ENCODE measurements at regions of chr15 and their contacts with region 1.

Region 1: DNA sequence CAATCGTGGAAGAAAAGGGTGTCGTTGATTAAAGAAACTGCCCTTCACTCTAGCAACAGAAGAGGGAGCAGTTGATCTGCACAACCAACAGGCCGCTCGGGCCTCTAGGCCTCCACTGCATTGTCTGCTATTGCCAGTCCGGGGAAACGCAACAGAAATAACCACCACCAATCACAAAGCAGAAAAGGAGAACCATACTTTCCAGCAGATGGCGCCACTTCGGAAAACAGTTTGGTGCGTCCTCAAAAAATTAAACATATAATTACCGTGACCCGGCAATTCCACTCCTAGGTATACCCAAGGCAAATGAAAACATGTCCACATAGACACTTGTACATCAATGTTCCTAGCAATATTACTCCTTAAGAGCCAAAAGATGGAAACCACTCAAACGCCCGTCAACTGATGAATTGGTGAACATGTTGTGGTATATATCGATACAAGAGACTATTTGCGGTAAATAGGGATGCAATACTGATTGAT is 154.1 kb downstream of the TJP1 start:
- DNase-seq: peak; percentile 55 to 73 (median 71)
- ATAC-seq: peak; percentile 80 to 95 (median 92)
- H3K4me3 ChIP-seq: no peak overlapping the region
- H3K27ac ChIP-seq: no peak overlapping the region
- H3K4me1 ChIP-seq: no peaks in the 10 kb centered on the region
- H3K27me3 ChIP-seq: peaks cover 0 to 3% (median 0%) of the 10 kb centered on the region in 9 donors
- CTCF ChIP-seq: peak; percentile 56 to 89 (median 80)
- POLR2A ChIP-seq: no peak

Region 2: DNA sequence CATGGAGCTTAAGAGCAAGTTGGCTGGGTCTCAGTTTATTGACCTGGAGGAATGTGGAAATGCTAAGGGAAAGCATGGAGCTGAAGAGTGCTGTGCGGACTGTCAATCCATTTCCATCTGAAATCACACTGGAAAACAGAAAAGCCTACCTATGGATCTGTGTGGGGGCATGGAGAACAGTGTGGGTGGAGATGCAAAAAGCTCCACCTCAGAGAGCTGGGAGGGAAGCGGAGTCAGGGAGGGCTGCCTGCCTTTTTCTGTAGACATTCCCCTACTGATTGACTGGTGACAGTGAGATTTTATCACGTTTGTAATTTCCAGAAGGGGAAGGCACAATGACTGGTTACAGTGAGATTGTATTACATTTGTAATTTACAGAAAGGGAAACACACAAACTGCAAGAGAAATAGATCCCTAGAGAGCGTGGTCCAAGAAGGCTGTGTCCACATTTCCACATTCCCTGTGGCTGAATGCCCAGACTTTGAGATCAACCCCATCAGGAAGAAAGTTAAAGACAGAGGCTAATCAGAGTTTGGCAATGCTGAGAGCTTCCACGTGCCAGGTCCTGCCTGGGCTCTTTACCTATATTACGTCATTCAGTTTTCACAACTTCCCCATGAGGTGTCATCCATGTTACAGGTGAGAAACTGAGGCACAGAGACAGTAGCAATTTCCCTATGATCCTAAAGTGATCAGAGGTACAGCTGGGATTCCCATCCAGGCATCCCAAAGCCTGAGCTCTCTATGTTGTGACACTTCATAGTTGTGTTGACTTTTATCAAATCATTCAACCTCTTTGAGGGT is 330.8 kb before region 1 on chr15:
- intact Hi-C with region 1: no loop called
- DNase-seq: no peak
- ATAC-seq: no peak
- H3K4me3 ChIP-seq: no peak overlapping the region
- H3K27ac ChIP-seq: no peak overlapping the region
- H3K4me1 ChIP-seq: no peaks in the 10 kb centered on the region
- H3K27me3 ChIP-seq: peaks cover 0 to 4% (median 0%) of the 10 kb centered on the region in 9 donors
- CTCF ChIP-seq: no peak
- POLR2A ChIP-seq: no peak

Region 3: DNA sequence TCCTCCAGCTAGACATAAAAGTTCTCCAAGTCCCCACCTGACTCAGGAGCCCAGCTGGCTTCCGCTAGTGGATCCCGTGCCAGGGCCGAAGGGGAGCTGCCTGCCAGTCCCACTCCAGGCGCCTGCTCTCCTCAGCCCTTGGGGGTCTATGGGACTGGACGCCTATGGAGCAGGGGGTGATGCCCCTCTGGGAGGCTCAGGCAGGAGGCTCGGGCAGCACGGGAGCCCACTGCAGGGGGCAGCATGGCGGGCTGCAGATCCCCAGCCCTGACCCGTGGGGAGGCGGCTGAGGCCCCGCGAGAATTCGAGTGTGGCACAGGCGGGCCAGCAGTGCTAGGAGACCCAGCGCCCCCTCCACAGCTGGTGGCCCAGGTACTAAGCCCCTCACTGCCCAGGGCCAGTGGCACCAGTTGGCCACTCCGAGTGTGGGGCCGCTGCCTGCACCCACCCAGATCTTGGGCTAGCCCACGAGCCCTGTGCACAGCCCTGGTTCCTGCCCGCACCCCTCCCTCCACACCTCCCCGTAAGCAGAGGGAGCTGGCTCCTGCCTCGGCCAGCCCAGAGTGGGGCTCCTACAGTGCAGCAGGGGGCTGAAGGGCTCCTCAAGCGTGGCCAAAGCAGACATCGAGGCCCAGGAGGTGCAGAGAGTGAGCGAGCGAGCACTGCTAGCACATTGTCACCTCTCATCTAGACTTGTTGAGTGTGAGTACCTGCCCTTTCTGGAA is 177.3 kb before region 1 on chr15:
- intact Hi-C with region 1: no loop called
- DNase-seq: no peak
- ATAC-seq: no peak
- H3K4me3 ChIP-seq: no peak overlapping the region
- H3K27ac ChIP-seq: no peak overlapping the region
- H3K4me1 ChIP-seq: no peaks in the 10 kb centered on the region
- H3K27me3 ChIP-seq: peaks cover 0 to 7% (median 0%) of the 10 kb centered on the region in 9 donors
- CTCF ChIP-seq: no peak
- POLR2A ChIP-seq: no peak

Region 4: GRCh38 chr15:29711531-29711930 is 43.4 kb after region 1 on chr15:
- intact Hi-C with region 1: loop called in 1 of 10 experiments (anchors 5 kb)
- DNase-seq: no peak
- ATAC-seq: no peak
- H3K4me3 ChIP-seq: no peak overlapping the region
- H3K27ac ChIP-seq: peak overlapping the region in 1 of 12 donors; percentile 35
- H3K4me1 ChIP-seq: peaks cover 0 to 8% (median 0%) of the 10 kb centered on the region in 12 donors
- H3K27me3 ChIP-seq: no peaks in the 10 kb centered on the region
- CTCF ChIP-seq: no peak
- POLR2A ChIP-seq: no peak

Region 5: GRCh38 chr15:29925227-29926082 is 257.3 kb after region 1 on chr15:
- intact Hi-C with region 1: loop called in 7 of 10 experiments (anchors 1 to 10 kb)
- DNase-seq: peak; percentile 81 to 85 (median 82)
- ATAC-seq: peak; percentile 95 to 98 (median 96)
- H3K4me3 ChIP-seq: no peak overlapping the region
- H3K27ac ChIP-seq: peak overlapping the region in 7 of 12 donors; percentile 1 to 58 (median 31)
- H3K4me1 ChIP-seq: peaks cover 0 to 22% (median 15%) of the 10 kb centered on the region in 12 donors
- H3K27me3 ChIP-seq: no peaks in the 10 kb centered on the region
- CTCF ChIP-seq: peak; percentile 77 to 96 (median 88)
- POLR2A ChIP-seq: no peak

Region 6: GRCh38 chr15:29935276-29936020 is 267.3 kb after region 1 on chr15:
- intact Hi-C with region 1: loop called in 7 of 10 experiments (anchors 1 to 10 kb)
- DNase-seq: no peak
- ATAC-seq: peak in 3 of 4 donors; percentile 70 to 81 (median 73)
- H3K4me3 ChIP-seq: no peak overlapping the region
- H3K27ac ChIP-seq: no peak overlapping the region
- H3K4me1 ChIP-seq: peaks cover 0 to 6% (median 0%) of the 10 kb centered on the region in 12 donors
- H3K27me3 ChIP-seq: no peaks in the 10 kb centered on the region
- CTCF ChIP-seq: peak in 9 of 12 donors; percentile 7 to 49 (median 32)
- POLR2A ChIP-seq: no peak

Region 7: GRCh38 chr15:30043211-30043655 is 375.1 kb after region 1 on chr15:
- intact Hi-C with region 1: loop called in 5 of 10 experiments (anchors 5 to 10 kb)
- DNase-seq: no peak
- ATAC-seq: no peak
- H3K4me3 ChIP-seq: no peak overlapping the region
- H3K27ac ChIP-seq: no peak overlapping the region
- H3K4me1 ChIP-seq: peaks cover 0 to 8% (median 0%) of the 10 kb centered on the region in 12 donors
- H3K27me3 ChIP-seq: peaks cover 0 to 18% (median 2%) of the 10 kb centered on the region in 9 donors
- CTCF ChIP-seq: peak in 8 of 12 donors; percentile 18 to 47 (median 38)
- POLR2A ChIP-seq: no peak

Region 8: GRCh38 chr15:30059771-30060170 is 391.6 kb after region 1 on chr15:
- intact Hi-C with region 1: loop called in 1 of 10 experiments (anchors 5 kb)
- DNase-seq: no peak
- ATAC-seq: no peak
- H3K4me3 ChIP-seq: no peak overlapping the region
- H3K27ac ChIP-seq: no peak overlapping the region
- H3K4me1 ChIP-seq: peaks cover 0 to 6% (median 0%) of the 10 kb centered on the region in 12 donors
- H3K27me3 ChIP-seq: no peaks in the 10 kb centered on the region
- CTCF ChIP-seq: no peak
- POLR2A ChIP-seq: no peak

Region 9: GRCh38 chr15:30073915-30074314 is 405.8 kb after region 1 on chr15:
- intact Hi-C with region 1: loop called in 6 of 10 experiments (anchors 2 to 10 kb)
- DNase-seq: no peak
- ATAC-seq: no peak
- H3K4me3 ChIP-seq: no peak overlapping the region
- H3K27ac ChIP-seq: no peak overlapping the region
- H3K4me1 ChIP-seq: no peaks in the 10 kb centered on the region
- H3K27me3 ChIP-seq: peaks cover 0 to 6% (median 0%) of the 10 kb centered on the region in 9 donors
- CTCF ChIP-seq: no peak
- POLR2A ChIP-seq: no peak

Measured in heart left ventricle (tissue), 16 donors.